HEK293 (cell line): ENCODE measurements at regions of chr2 and their contacts with region 1.

Region 1: DNA sequence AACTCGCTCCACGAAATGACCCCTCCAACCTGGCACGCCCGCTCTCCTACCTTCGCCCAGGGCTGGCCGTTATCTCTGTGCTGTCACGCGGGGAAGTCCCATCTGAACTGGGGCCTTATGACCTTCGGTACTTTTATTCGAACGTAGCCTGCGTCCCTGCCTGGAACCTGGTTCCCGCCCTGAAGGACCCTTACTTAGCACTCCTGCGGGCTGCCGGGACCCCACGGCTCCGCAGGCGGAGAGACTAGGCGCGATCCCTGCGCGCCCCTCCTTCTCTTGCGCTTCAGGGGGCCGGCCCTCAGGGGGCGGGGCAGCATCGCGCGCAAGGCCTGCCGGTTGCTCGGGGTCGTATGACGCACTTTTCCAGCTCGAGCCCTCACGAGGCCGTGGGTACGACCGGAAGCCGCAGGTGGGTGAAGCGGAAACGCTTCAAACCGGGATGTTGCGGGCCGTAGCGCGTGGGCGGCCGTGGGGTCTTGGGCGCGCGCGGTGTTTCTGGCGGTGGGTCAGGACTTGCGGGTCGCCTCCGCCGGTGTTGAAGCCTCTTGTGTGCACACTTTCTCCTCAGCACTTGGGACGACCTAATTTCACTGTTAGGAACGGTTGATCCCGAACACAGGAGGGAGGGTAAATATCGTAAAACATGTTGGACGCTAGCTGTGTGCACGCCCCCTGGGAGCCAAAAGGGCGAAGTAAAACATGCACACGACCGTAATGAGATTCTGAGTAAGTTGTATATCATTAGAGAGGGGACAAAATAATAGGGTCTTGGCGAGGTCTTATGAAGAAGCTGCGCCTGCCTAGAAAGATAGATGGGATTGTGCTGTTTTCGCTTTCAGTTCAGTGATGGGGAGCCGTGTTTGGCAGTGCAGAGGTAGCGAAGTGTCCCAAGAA is at the starts of genes LIPT1 and TSGA10:
- H3K4me3 ChIP-seq: peak within 1 kb of the TSS; percentile 63
- H3K27ac ChIP-seq: peak within 1 kb of the TSS; percentile 71
- H3K4me1 ChIP-seq: peaks cover 3% of the 10 kb centered on the region; the same call in 1 of the 2 replicates
- CTCF ChIP-seq: peak; percentile 79

Region 2: GRCh38 chr2:99141110-99142108 is 13.5 kb before region 1 on chr2 and contains the start of gene C2orf15:
- CTCF ChIA-PET with region 1: no interaction called
- POLR2A ChIA-PET with region 1: interaction called, 58 read pairs
- H3K4me3 ChIP-seq: peak within 1 kb of the TSS; percentile 81
- H3K27ac ChIP-seq: peak within 1 kb of the TSS; percentile 74; the same call in 1 of the 2 replicates
- H3K4me1 ChIP-seq: peaks cover 2% of the 10 kb centered on the region; the same call in 1 of the 2 replicates
- CTCF ChIP-seq: no peak

Region 3: DNA sequence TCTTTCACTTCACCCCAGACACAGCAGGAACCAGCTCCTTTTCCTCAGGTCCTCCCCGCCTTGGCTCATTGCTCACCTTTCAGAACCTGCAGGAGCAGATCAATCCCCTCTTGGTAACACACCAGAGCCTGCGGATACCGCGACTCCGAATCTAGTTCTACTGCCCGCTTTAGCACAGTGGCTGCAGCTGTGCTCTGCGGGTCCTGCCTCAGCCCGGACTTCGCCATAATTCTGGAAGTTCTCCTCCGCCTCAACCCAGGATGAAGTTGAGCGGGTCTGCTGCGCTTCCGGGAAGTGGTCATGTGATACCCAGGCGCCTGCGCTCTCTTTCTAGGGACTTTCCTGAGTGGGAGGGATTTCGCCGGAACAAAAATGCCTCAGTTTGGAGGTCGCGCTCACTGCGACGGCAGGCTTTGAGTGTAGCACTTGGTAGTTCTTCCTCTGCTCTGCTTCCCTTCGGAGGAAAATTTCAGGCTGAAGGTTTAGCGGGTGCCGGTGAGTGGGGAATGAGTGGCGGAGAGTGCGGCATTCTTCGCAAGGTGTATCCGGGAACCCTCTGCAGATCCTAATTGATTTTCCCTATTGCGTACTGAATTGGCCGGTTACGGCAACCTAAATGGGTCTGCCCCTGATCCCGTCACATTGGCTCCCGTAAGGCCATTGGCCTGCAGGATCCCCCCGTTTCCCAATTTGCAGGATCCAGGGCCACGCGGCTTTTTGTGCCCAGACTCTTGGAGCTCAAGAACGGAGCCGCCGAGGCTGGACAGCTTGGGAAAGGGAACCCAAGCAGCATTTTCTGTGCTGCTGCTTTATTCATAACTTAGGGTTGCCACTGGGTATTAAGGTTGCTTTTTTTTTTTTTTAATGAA is 26.1 kb after region 1 on chr2 and contains the starts of genes MITD1 and MRPL30:
- CTCF ChIA-PET with region 1: no interaction called
- POLR2A ChIA-PET with region 1: interaction called, 10 read pairs
- H3K4me3 ChIP-seq: peak within 1 kb of the TSS; percentile 71
- H3K27ac ChIP-seq: peak within 1 kb of the TSS; percentile 55; the same call in 1 of the 2 replicates
- H3K4me1 ChIP-seq: 0 out of 2 replicates have a peak, but pooled peaks cover 2% of the 10 kb centered on the region
- CTCF ChIP-seq: no peak